Prostate gland (tissue), 2 donors: ENCODE measurements at regions of chr15 and their contacts with region 1.

Region 1: DNA sequence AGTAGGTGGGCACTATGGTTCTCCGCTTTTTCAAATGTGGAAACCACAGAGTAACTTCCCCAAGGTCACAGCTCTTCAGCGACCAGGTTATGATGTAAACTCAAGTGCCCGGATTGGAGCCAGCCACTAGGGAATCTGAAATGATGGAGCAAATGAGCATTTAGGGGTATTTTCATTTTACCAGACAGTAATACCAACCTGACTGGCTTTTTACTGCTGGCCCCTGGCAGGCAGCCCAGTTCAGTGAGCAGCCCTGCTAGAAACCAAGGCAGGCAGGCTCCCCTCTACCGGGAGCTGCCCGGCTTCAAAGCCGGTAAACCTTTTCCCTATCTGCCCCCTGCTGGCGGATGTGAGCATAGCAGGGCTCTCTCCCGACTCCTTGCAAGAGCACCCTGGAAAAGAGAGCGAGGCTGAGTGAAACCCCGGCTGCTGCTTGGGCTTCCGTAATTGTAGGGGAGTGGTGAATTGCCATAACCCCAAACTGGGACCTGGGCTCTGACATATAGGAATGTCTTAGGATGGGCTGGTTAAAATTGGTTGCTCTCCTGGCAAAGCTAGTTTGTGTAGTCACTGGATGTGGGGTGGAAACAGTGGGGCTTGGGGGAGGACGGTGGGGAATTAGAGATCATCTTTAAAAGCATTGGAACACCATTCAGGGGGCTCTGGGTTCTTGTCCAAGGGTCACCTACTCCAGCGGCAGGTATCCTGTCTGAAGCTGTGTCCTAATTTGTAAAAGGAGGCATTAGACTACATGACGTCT is 98.0 kb upstream of the TNFAIP8L3 start:
- DNase-seq: peak; percentile 86
- H3K4me3 ChIP-seq: no peak overlapping the region
- H3K27ac ChIP-seq: no peak overlapping the region
- H3K4me1 ChIP-seq: no peaks in the 10 kb centered on the region
- H3K27me3 ChIP-seq: peaks cover 4% of the 10 kb centered on the region
- CTCF ChIP-seq: peak; percentile 79 to 93 (median 90)
- POLR2A ChIP-seq: no peak

Region 2: GRCh38 chr15:51162865-51163762 is 29.6 kb before region 1 on chr15:
- intact Hi-C with region 1: loop called (anchors 1 kb)
- DNase-seq: peak; percentile 65
- H3K4me3 ChIP-seq: no peak overlapping the region
- H3K27ac ChIP-seq: peak overlapping the region in 1 of 2 donors; percentile 4
- H3K4me1 ChIP-seq: no peaks in the 10 kb centered on the region
- H3K27me3 ChIP-seq: no peaks in the 10 kb centered on the region
- CTCF ChIP-seq: peak; percentile 84 to 93 (median 86)
- POLR2A ChIP-seq: no peak